Activated B cell treated with CpG ODN at 0.5 μM for 24 hours (primary cell): ENCODE measurements at regions of chr5 and their contacts with region 1.

Region 1: DNA sequence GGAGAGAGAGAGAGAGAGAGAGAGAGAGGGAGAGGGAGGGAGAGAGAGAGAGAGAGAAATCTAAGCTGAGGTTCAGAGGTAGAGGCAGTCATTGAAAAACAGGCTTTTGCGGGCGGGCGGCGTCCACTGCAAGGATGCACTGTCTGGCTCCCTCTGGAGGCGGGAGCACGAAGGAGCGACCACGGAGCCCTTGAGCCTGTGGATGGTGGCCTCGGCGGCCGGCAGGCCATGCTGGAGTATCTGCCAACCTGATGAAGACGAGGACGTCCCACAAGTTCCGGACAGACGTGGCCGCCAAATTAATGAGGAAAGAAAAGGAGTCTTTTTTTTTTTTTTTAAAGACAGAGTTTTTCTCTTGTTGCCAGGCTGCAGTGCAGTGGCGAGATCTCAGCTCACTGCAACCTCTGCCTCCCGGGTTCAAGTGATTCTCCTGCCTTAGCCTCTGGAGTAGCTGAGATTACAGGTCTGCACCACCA is 2.2 kb upstream of the CCDC125 start:
- DNase-seq: peak; percentile 56
- ATAC-seq: peak; percentile 72
- H3K4me3 Mint-ChIP-seq: peak overlapping the region; percentile 46
- H3K27ac Mint-ChIP-seq: peak overlapping the region; percentile 59
- H3K4me1 Mint-ChIP-seq: peaks cover 25% of the 10 kb centered on the region
- H3K27me3 Mint-ChIP-seq: no peaks in the 10 kb centered on the region
- CTCF ChIP-seq: no peak

Region 2: DNA sequence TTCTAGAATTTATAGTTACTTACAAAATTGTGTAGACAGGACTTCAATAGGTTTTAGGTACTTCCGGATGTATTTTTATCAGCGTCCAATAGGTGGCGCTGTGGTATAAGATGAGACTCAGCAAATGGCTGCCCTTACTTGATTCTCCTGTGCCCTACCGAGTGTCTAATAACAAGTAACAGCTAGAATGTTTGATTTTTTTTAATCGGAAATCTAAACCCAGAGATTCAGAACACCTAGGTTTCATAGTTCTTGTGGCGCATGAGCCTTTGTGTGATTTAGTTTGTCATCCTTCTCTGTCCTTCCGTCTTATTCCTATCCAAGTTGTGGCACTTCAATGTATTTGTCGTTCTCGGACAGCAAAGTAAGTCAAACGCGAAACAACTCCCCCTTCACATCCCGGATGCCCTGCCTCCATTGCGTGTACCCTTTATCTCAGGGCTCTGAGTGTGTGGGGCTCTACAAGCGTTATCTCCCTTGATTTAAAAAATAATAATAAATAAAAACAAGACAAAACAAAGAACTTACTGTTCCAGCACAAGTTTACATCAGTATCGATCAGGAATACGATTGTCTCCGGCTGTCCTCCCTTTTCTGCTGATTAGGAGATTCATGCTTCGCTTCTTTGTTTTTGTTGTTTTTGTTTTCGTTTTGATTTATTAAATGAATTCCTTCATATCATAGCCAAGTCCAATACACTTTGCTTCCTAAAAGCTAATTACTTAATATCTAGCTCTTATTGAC is 291.7 kb before region 1 on chr5:
- CTCF ChIA-PET with region 1: interaction called, 5 read pairs
- POLR2A ChIA-PET with region 1: no interaction called
- intact Hi-C with region 1: loop called (anchors 1 kb)
- DNase-seq: peak; percentile 29
- ATAC-seq: peak; percentile 96
- H3K4me3 Mint-ChIP-seq: peak overlapping the region; percentile 84
- H3K27ac Mint-ChIP-seq: peak overlapping the region; percentile 79
- H3K4me1 Mint-ChIP-seq: no peaks in the 10 kb centered on the region
- H3K27me3 Mint-ChIP-seq: no peaks in the 10 kb centered on the region
- CTCF ChIP-seq: peak; percentile 27

Region 3: DNA sequence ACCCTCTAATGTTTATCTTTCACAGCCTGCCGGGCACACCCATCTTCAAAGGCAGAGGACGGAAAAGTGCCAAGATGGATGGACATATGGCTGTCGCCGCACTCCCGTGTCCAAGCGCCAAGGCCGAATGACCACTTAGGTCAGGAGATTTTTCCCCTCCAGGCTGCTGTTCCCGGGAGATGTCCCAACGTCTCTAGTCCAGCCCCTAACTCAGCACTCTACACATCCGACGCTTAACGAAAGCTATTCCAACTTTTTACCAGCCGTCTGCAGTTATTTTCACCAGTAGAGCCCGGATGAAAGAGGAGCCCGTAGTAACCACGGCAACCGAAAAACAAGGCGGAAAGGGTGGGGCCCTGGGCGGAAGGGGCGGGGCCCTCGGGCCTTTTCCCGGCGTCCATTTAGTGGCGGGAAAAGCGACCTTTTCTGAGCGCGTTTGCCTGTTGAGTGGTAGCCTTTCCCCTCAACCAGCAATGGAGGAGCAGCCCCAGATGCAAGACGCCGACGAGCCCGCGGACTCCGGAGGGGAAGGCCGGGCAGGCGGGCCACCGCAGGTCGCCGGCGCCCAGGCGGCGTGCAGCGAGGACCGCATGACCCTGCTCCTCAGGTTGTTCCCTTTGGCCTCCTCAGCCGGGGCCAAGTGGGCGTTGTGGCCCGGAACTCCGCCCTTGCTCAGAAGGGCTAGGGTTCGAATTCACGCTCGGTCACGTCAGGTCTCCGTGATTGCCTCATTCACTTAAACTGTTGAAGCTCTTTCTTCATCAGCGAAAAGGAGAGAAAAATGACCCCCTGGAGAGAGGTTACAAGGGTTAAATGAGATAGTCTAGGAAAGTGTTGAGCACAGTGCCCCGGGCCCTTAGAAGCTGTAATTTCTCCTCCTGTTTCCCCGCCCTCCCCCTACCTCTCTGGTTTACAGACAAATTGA is 145.4 kb before region 1 on chr5 and contains the start of gene CENPH:
- CTCF ChIA-PET with region 1: no interaction called
- POLR2A ChIA-PET with region 1: no interaction called
- intact Hi-C with region 1: loop called (anchors 1 kb)
- DNase-seq: peak; percentile 88
- ATAC-seq: peak; percentile 92
- H3K4me3 Mint-ChIP-seq: peak within 1 kb of the TSS; percentile 92
- H3K27ac Mint-ChIP-seq: peak within 1 kb of the TSS; percentile 90
- H3K4me1 Mint-ChIP-seq: peaks cover 14% of the 10 kb centered on the region
- H3K27me3 Mint-ChIP-seq: no peaks in the 10 kb centered on the region
- CTCF ChIP-seq: no peak
- total RNA-seq, gene CENPH: 13.0 and 13.5 TPM in 2 replicates

Region 4: GRCh38 chr5:69234457-69235268 is 100.2 kb before region 1 on chr5 and contains the start of gene CDK7:
- CTCF ChIA-PET with region 1: no interaction called
- POLR2A ChIA-PET with region 1: interaction called, 5 read pairs
- intact Hi-C with region 1: loop called (anchors 1 kb)
- DNase-seq: peak; percentile 88
- ATAC-seq: peak; percentile 100
- H3K4me3 Mint-ChIP-seq: peak within 1 kb of the TSS; percentile 97
- H3K27ac Mint-ChIP-seq: peak within 1 kb of the TSS; percentile 88
- H3K4me1 Mint-ChIP-seq: peaks cover 35% of the 10 kb centered on the region
- H3K27me3 Mint-ChIP-seq: no peaks in the 10 kb centered on the region
- CTCF ChIP-seq: no peak
- total RNA-seq, gene CDK7: 27.1 and 33.5 TPM in 2 replicates